B cell (primary cell): ENCODE measurements at regions of chr3 and their contacts with region 1.

Region 1: DNA sequence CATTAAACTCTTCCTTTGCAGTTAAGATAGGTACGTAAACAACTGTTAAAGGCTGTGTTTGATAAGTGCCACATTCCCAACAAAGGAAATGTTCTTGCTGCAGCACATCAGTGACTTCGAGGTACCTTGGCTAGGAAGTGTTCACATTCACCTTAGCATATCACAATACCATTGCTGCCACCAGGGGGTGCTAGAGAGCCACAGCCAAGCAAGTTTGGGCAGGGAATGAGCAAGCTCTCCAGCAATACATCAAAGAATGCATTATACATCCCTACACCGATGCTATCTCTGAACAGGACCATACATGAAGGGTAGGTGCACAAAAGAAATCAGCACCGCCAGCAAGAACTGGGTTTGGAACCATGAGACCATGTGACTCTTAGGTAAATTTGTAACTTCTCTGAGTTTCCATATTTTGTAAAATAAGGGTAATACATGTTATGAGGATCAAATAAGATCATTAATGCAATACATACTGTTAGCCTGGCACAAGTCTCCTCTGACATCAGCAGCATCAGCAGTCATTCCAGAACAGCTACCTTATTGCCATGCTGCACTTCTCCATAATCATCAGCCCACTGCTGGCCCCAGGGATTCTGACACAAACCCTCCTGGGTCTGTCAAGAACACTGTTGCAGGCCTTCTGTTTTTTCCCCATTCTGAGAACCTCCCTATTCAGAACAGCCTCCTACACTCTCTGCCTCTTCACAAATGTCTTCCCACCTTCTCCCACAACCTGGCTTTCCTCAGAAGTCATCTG is 37.6 kb downstream of the RYK start:
- DNase-seq: peak; percentile 81
- ATAC-seq: peak; percentile 86
- H3K4me3 ChIP-seq: no peak overlapping the region
- H3K4me3 Mint-ChIP-seq: no peak overlapping the region
- H3K27ac ChIP-seq: no peak overlapping the region
- H3K27ac Mint-ChIP-seq: no peak overlapping the region
- H3K4me1 ChIP-seq: no peaks in the 10 kb centered on the region
- H3K4me1 Mint-ChIP-seq: peaks cover 15% of the 10 kb centered on the region
- H3K27me3 ChIP-seq: no peaks in the 10 kb centered on the region
- H3K27me3 Mint-ChIP-seq: no peaks in the 10 kb centered on the region
- CTCF ChIP-seq: peak; percentile 99

Region 2: GRCh38 chr3:134197681-134198261 is 15.3 kb before region 1 on chr3:
- CTCF ChIA-PET with region 1: interaction called, 72 read pairs
- POLR2A ChIA-PET with region 1: no interaction called
- intact Hi-C with region 1: loop called (anchors 1 kb)
- DNase-seq: peak; percentile 52
- ATAC-seq: peak; percentile 54
- H3K4me3 ChIP-seq: no peak overlapping the region
- H3K4me3 Mint-ChIP-seq: no peak overlapping the region
- H3K27ac ChIP-seq: no peak overlapping the region
- H3K27ac Mint-ChIP-seq: no peak overlapping the region
- H3K4me1 ChIP-seq: no peaks in the 10 kb centered on the region
- H3K4me1 Mint-ChIP-seq: no peaks in the 10 kb centered on the region
- H3K27me3 ChIP-seq: no peaks in the 10 kb centered on the region
- H3K27me3 Mint-ChIP-seq: no peaks in the 10 kb centered on the region
- CTCF ChIP-seq: peak; percentile 78

Region 3: DNA sequence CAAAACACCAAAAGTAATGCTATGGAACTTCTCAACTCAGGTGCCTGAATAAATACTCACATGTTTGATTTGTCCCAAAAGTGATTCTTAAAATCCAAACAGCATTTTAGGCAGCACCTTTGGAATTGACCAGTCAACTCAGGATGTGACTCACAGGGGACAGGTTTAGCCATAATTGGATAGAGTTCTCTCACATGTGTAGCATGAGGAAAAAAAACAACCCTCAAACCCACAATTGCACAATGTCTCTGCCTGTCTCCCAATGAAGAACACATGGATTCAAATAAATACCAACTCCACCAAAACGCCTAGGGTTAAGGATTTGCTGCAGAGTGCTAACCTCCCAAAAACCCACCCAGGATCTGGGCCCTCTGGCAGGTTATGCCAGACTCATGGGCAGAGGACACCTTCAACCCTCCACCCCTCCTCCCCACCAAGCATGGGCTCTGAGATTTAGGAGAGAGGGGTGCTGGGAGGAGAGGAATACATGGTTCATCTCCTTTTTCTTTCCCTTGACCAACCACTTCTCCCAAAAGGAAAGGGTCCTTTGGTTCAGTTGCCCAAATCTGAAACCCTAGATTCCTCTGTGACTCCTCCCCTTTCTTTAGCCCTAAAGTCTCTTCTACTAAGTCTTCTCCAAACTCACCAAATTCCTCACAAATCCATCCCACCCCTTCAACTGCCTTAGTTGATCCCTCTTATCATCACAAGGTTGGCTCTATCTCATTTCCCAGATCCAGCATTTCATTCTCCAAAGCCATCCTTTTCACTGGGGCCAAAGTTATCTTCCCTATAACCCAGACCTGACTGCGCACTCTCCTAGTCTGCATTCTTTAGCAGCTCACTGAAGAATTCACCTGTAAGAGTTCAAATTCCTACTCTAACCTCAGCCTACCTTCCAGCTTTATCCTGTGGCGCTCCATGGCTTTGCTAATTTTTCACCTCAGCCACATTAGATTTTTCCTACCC is 29.8 kb after region 1 on chr3:
- CTCF ChIA-PET with region 1: interaction called, 50 read pairs
- POLR2A ChIA-PET with region 1: no interaction called
- intact Hi-C with region 1: no loop called
- DNase-seq: no peak
- ATAC-seq: no peak
- H3K4me3 ChIP-seq: no peak overlapping the region
- H3K4me3 Mint-ChIP-seq: no peak overlapping the region
- H3K27ac ChIP-seq: no peak overlapping the region
- H3K27ac Mint-ChIP-seq: peak overlapping the region; percentile 23
- H3K4me1 ChIP-seq: peaks cover 16 to 23% of the 10 kb centered on the region in 2 donors
- H3K4me1 Mint-ChIP-seq: peaks cover 64% of the 10 kb centered on the region
- H3K27me3 ChIP-seq: no peaks in the 10 kb centered on the region
- H3K27me3 Mint-ChIP-seq: no peaks in the 10 kb centered on the region
- CTCF ChIP-seq: no peak

Region 4: GRCh38 chr3:134308350-134308891 is 95.3 kb after region 1 on chr3:
- CTCF ChIA-PET with region 1: interaction called, 18 read pairs
- POLR2A ChIA-PET with region 1: no interaction called
- intact Hi-C with region 1: no loop called
- DNase-seq: peak; percentile 66
- ATAC-seq: peak; percentile 80
- H3K4me3 ChIP-seq: peak overlapping the region in 1 of 5 experiments; percentile 18
- H3K4me3 Mint-ChIP-seq: no peak overlapping the region
- H3K27ac ChIP-seq: no peak overlapping the region
- H3K27ac Mint-ChIP-seq: no peak overlapping the region
- H3K4me1 ChIP-seq: peaks cover 2 to 6% of the 10 kb centered on the region in 2 donors
- H3K4me1 Mint-ChIP-seq: peaks cover 3% of the 10 kb centered on the region
- H3K27me3 ChIP-seq: peaks cover 0 to 28% (median 9%) of the 10 kb centered on the region in 4 experiments
- H3K27me3 Mint-ChIP-seq: peaks cover 27% of the 10 kb centered on the region
- CTCF ChIP-seq: peak; percentile 89

Region 5: DNA sequence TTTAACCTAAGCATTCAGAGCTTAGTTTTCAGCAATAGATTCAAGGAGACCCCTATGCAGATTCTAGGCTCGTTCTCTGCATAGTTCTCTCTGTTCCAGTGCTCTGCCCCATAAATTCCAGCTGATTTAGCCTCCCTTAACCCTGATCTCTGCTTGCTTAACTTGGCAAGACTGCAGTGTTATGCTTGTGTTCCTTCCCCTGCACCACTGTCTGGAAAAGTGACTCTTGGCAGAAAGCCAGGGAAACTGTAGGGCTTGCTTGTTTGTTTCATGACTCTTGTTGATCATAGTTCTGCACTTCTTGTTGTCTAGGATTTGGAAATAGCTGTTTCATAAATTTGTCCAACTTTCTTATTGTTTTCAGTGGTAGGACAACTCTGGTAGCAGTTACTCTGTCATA is 232.6 kb after region 1 on chr3:
- CTCF ChIA-PET with region 1: interaction called, 12 read pairs
- POLR2A ChIA-PET with region 1: no interaction called
- intact Hi-C with region 1: no loop called
- DNase-seq: no peak
- ATAC-seq: no peak
- H3K4me3 ChIP-seq: no peak overlapping the region
- H3K4me3 Mint-ChIP-seq: no peak overlapping the region
- H3K27ac ChIP-seq: no peak overlapping the region
- H3K27ac Mint-ChIP-seq: no peak overlapping the region
- H3K4me1 ChIP-seq: no peaks in the 10 kb centered on the region
- H3K4me1 Mint-ChIP-seq: no peaks in the 10 kb centered on the region
- H3K27me3 ChIP-seq: peaks cover 0 to 18% (median 0%) of the 10 kb centered on the region in 4 experiments
- H3K27me3 Mint-ChIP-seq: peaks cover 47% of the 10 kb centered on the region
- CTCF ChIP-seq: no peak

Region 6: GRCh38 chr3:134494495-134494894 is 281.4 kb after region 1 on chr3:
- CTCF ChIA-PET with region 1: interaction called, 4 read pairs
- POLR2A ChIA-PET with region 1: no interaction called
- intact Hi-C with region 1: loop called (anchors 5 kb)
- DNase-seq: no peak
- ATAC-seq: no peak
- H3K4me3 ChIP-seq: no peak overlapping the region
- H3K4me3 Mint-ChIP-seq: no peak overlapping the region
- H3K27ac ChIP-seq: no peak overlapping the region
- H3K27ac Mint-ChIP-seq: no peak overlapping the region
- H3K4me1 ChIP-seq: no peaks in the 10 kb centered on the region
- H3K4me1 Mint-ChIP-seq: peaks cover 14% of the 10 kb centered on the region
- H3K27me3 ChIP-seq: no peaks in the 10 kb centered on the region
- H3K27me3 Mint-ChIP-seq: no peaks in the 10 kb centered on the region
- CTCF ChIP-seq: no peak